ENCODE measurements at regions of chr9 and their contacts with region 1.

Region 1: GRCh38 chr9:23123048-23123632 is 676.5 kb downstream of the DMRTA1 start:
- DNase-seq: peak in 1 of 2 donors; percentile 55
- ATAC-seq: no peak
- H3K4me3 ChIP-seq: no peak overlapping the region
- H3K27ac ChIP-seq: no peak overlapping the region
- H3K4me1 ChIP-seq: no peaks in the 10 kb centered on the region
- H3K27me3 ChIP-seq: no peaks in the 10 kb centered on the region

Region 2: DNA sequence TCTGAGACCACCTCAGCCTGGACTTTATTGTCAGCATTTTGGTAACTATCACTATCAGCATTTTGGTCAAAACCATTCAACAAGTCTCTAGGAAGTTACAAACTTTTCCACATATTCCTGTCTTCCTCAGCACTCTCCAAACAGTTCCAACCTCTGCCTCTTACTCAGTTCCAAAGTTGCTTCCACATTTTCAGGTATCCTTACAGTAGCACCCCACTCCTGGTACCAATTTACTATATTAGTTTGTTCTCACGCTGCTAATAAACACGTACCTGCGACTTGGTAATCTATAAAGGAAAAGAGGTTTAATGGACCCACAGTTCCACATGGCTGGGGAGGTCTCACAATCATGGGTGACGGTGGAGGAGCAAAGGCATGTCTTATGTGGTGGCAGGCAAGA is 125.2 kb before region 1 on chr9:
- intact Hi-C with region 1: no loop called
- DNase-seq: no peak
- ATAC-seq: no peak
- H3K4me3 ChIP-seq: no peak overlapping the region
- H3K27ac ChIP-seq: no peak overlapping the region
- H3K4me1 ChIP-seq: no peaks in the 10 kb centered on the region
- H3K27me3 ChIP-seq: no peaks in the 10 kb centered on the region

Region 3: GRCh38 chr9:23483566-23483965 is 360.4 kb after region 1 on chr9:
- intact Hi-C with region 1: loop called in 1 of 2 experiments (anchors 10 kb)
- DNase-seq: no peak
- ATAC-seq: no peak
- H3K4me3 ChIP-seq: no peak overlapping the region
- H3K27ac ChIP-seq: no peak overlapping the region
- H3K4me1 ChIP-seq: no peaks in the 10 kb centered on the region
- H3K27me3 ChIP-seq: no peaks in the 10 kb centered on the region

Region 4: DNA sequence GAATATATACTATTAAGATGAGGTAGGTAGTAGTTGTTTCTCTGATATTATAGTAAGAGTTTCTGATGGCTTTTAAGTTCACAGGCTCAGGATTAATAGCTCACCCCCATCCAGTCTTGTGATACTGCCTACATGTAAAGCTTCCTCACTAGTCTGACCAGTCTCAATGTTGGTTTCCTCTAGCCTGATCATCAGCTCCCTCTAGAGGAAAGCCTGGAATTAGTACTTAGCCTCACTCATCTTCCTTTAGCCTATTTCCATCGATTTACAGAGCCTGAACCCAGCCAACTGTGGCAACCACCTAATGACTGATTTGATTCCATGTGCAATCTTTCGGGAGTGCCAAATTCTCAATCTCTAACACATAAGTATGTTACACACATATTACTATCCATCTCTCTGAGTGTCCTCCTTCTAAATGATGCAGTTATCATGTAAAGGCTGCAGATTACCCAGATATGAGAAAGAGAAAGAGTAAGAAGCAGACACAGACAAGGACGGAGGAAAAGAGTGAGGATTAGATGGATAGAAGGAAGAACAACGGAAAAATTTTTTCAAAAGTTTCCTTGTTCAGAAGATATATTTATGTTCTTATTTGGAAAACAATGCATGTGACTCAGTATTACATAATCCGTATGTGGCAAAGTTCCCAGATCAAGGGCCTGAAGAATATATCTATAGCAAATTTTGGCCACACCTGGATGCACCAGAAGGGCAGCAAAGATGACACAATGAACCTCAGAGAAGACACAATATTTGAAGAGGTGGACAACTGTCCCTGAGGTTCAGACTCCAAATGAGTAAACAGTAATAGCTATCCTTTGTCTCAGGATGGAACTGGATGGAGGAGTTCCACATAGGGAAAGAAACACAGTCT is 369.2 kb after region 1 on chr9:
- intact Hi-C with region 1: loop called (anchors 10 kb)
- DNase-seq: no peak
- ATAC-seq: no peak
- H3K4me3 ChIP-seq: no peak overlapping the region
- H3K27ac ChIP-seq: no peak overlapping the region
- H3K4me1 ChIP-seq: no peaks in the 10 kb centered on the region
- H3K27me3 ChIP-seq: no peaks in the 10 kb centered on the region

Measured in aorta (tissue), 5 donors.